ENCODE measurements at regions of chr19 and their contacts with region 1.

Region 1: GRCh38 chr19:17632577-17632976 is 55.6 kb downstream of the UNC13A start:
- DNase-seq: no peak
- ATAC-seq: no peak
- H3K4me3 ChIP-seq: no peak overlapping the region
- H3K27ac ChIP-seq: no peak overlapping the region
- H3K4me1 ChIP-seq: no peaks in the 10 kb centered on the region
- H3K27me3 ChIP-seq: peaks cover 0 to 5% (median 3%) of the 10 kb centered on the region in 3 donors
- CTCF ChIP-seq: no peak

Region 2: DNA sequence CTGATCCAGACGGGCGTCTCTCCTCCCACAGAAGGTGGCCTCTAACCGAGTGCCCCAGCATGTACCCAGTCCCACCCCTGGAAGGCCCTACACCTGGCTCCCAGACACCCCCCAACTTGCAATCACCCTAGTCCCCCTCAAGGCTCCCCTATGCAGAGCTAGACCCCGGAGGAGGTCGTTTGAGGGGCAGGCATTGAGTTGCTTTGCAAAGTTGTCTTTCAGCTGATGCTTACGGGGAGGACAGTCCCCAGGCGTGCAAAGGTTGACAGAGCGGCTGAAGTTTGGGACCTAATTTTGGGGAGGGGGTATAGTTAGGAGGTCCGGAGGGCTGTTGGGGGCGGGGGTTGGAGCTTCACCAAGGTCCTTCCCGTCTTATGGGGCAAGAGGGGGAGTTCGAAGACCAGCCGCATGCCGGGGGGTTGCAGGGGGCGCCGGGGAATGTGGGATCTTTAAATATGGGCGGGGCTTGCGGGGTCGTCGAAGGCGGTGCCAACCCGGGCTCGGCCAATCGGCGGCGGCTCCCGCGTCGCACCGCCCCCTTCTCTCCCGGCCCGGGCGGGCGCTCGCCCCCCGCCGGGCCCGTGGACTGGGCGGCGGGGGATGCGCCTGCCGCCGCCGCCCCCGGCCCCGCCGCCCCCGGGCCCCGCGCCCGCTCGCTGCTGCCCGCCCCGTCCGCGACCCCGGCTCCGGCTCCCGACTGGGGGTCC is 334.1 kb after region 1 on chr19 and contains the start of gene KCNN1:
- intact Hi-C with region 1: loop called in 1 of 2 experiments (anchors 10 kb)
- DNase-seq: no peak
- ATAC-seq: no peak
- H3K4me3 ChIP-seq: peak within 1 kb of the TSS; percentile 38
- H3K27ac ChIP-seq: no peak within 1 kb of the TSS
- H3K4me1 ChIP-seq: no peaks in the 10 kb centered on the region
- H3K27me3 ChIP-seq: peaks cover 0 to 71% (median 20%) of the 10 kb centered on the region in 3 donors
- CTCF ChIP-seq: no peak
- total RNA-seq, gene KCNN1: not detected

Measured in psoas muscle (tissue), 8 donors.